ENCODE measurements at regions of chr5 and their contacts with region 1.

Region 1: GRCh38 chr5:83564069-83564749 is 92.7 kb downstream of the VCAN start:
- DNase-seq: no peak
- H3K4me3 ChIP-seq: no peak overlapping the region
- H3K27ac ChIP-seq: no peak overlapping the region
- H3K4me1 ChIP-seq: no peaks in the 10 kb centered on the region
- H3K27me3 ChIP-seq: peaks cover 0 to 6% (median 0%) of the 10 kb centered on the region in 7 donors
- CTCF ChIP-seq: peak in 10 of 11 experiments; percentile 18 to 66 (median 52)
- POLR2A ChIP-seq: no peak

Region 2: DNA sequence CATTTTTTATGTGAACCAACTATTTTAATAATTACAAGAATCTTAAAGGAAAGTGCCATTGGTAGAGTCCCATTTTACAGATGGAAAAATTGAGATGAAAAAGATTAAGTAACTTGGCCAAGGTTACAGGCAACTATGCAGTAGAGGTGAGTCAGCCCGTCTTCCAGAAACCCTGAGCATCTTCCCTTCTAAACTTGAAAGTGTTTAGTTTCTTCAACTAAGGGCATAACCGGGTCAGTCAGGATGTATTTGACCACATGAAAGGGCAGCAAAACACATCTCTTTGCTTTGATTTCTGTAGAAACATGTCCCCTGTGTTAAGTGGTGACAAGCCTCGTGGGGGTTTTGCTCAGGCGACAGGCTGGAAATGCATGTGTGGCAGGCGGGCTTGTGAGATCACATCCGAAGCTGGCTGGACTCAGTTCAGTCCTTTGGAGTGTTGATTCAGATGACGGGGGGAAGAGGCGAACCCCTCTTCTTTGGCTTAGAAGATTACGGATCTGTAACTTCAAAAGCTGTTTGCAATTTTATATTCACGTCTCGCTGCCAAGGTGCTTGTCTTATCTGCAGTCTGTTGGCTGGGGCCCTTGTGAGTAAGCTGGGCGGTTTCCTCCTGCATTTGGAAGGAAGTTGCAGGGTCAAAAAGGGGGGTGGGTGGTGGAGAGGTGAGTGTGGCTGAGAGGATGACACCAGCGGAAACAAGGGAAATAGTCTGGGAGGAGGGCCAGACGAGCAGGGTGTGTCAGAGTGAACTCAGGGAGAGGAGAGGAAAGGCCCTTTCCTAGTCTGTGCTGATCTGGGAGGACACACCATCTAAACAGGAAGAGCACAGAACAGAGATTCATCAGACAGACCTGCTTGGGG is 1207.2 kb before region 1 on chr5:
- intact Hi-C with region 1: loop called (anchors 5 kb)
- DNase-seq: no peak
- H3K4me3 ChIP-seq: peak overlapping the region in 1 of 8 donors; percentile 16
- H3K27ac ChIP-seq: peak overlapping the region in 5 of 8 donors; percentile 33 to 55 (median 50)
- H3K4me1 ChIP-seq: peaks cover 5 to 40% (median 18%) of the 10 kb centered on the region in 6 donors
- H3K27me3 ChIP-seq: no peaks in the 10 kb centered on the region
- CTCF ChIP-seq: no peak
- POLR2A ChIP-seq: no peak

Region 3: DNA sequence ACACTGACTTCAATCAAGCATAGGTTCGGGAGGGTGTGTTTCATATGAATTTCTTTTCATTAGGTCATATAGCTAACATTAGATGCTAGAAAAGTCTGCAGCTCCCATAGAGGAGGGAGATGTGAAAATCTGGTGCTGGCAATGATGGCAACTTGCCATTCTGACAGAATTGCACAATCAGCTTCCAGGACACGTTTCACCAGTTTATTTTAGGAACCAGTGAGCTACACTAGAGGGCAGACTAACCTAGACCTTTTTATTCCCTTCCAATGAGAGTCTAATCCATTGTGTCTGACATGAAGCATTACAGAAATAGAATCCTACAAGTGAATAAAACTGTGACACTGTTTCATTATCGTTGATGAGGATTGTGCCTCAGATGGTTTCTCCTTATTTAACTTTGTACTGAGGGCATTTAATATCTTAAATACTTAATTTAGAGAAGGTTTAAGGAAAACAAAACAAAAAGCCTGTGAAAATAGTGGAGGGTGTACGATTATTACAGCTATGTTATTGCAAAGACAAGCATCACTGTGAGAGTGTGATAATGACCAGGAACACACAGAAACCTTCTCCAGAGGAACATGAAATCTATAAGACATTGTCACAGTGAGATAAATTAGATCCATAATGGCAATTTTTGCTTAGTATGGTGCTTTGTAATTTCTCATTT is 922.7 kb before region 1 on chr5:
- intact Hi-C with region 1: loop called (anchors 5 kb)
- DNase-seq: no peak
- H3K4me3 ChIP-seq: no peak overlapping the region
- H3K27ac ChIP-seq: no peak overlapping the region
- H3K4me1 ChIP-seq: peaks cover 0 to 8% (median 0%) of the 10 kb centered on the region in 6 donors
- H3K27me3 ChIP-seq: no peaks in the 10 kb centered on the region
- CTCF ChIP-seq: peak; percentile 9 to 66 (median 56)
- POLR2A ChIP-seq: no peak

Measured in spleen (tissue), 13 donors.